ENCODE measurements at regions of chr11 and their contacts with region 1.

Region 1: DNA sequence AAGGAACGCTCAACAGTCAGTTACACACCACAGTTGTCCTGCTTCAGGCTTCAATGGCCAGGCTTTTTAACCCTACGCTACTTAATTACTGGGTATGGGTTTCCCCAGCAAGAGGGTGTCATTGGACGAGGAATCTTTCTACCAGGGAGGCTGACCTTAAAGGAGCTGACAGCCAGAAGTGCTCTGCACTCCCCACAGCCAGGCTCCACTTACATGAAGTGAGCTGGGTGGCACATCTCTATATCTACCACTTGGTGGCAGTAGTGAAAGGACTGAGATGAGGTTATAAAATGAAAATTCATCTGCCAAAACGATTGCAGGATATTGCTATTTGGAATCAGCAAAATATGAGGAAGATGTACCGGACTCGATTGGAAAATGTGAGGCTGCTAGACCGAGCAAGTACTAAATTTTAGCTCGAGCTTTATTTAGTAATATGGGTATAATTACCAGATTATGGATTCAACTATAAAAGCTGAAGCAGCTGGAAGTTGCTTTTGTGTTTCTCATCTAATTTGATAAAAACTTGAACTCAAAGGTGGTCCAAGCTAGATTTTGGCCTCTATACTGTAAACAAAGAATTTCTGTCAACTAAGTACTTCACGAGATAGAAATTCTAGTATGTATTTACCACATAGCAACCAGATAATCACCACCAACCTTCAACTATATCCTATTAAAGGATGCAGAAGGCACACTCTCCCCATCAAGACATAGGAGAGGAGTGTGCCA is 53.9 kb upstream of the CEP126 start:
- DNase-seq: peak; percentile 22 to 28
- H3K4me3 ChIP-seq: no peak overlapping the region
- H3K27ac ChIP-seq: no peak overlapping the region
- H3K4me1 ChIP-seq: no peaks in the 10 kb centered on the region
- H3K27me3 ChIP-seq: no peaks in the 10 kb centered on the region
- CTCF ChIP-seq: peak; percentile 64 to 79 (median 67)
- POLR2A ChIP-seq: no peak

Region 2: GRCh38 chr11:102007567-102008437 is 146.9 kb after region 1 on chr11:
- intact Hi-C with region 1: loop called (anchors 10 kb)
- DNase-seq: no peak
- H3K4me3 ChIP-seq: no peak overlapping the region
- H3K27ac ChIP-seq: no peak overlapping the region
- H3K4me1 ChIP-seq: no peaks in the 10 kb centered on the region
- H3K27me3 ChIP-seq: no peaks in the 10 kb centered on the region
- CTCF ChIP-seq: peak; percentile 39 to 53 (median 52)
- POLR2A ChIP-seq: no peak

Measured in uterus (tissue), 4 donors.